IMR-90 (cell line): ENCODE measurements at regions of chr9 and their contacts with region 1.

Region 1: DNA sequence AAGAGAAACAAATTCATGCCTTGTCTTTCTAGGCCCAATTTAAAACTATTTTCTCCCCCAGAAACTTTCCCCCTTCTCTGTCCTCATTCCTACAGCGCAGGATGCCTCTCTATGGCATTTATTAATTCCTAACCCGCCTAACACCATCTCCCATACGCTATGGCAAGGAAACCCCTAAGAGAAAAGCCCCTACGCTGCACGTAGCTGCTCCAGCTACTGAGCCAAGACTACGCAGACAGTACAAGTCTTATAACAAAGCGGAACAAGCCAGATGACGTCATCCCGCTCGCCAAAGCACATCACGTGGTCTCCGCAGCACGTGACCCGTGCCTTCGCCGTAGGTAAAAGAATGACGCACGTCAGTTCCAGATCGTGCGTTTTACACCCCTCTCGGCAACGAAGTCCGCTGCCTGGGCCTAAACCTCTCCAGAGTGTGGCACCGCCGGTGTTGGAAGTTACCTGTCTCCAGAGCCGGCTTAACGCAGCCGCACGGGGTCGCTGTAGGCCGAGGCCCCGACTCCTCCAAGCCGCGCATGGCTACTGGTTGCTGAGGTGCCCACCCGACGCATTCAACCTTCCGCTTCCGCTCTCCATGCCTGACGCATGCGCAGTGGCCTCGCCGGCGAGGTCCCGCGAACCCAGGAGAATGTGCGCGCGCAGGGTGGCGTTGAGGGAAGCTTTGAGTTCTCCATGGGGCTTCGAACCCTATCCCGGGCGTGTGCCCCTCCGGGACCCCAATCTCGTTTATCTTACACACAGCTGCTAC is at the start of gene TRMO:
- DNase-seq: peak; percentile 99
- ATAC-seq: peak; percentile 94
- H3K4me3 ChIP-seq: peak within 1 kb of the TSS; percentile 76
- H3K27ac ChIP-seq: peak within 1 kb of the TSS; percentile 96
- H3K4me1 ChIP-seq: peaks cover 2% of the 10 kb centered on the region; the same call in 1 of the 2 replicates
- H3K27me3 ChIP-seq: peaks cover 4% of the 10 kb centered on the region; the same call in 1 of the 2 replicates
- CTCF ChIP-seq: peak; percentile 72
- POLR2A ChIP-seq: peak; percentile 98
- RAD21 ChIP-seq: peak; percentile 58
- total RNA-seq, gene TRMO: 17.5 and 19.9 TPM in 2 replicates

Region 2: DNA sequence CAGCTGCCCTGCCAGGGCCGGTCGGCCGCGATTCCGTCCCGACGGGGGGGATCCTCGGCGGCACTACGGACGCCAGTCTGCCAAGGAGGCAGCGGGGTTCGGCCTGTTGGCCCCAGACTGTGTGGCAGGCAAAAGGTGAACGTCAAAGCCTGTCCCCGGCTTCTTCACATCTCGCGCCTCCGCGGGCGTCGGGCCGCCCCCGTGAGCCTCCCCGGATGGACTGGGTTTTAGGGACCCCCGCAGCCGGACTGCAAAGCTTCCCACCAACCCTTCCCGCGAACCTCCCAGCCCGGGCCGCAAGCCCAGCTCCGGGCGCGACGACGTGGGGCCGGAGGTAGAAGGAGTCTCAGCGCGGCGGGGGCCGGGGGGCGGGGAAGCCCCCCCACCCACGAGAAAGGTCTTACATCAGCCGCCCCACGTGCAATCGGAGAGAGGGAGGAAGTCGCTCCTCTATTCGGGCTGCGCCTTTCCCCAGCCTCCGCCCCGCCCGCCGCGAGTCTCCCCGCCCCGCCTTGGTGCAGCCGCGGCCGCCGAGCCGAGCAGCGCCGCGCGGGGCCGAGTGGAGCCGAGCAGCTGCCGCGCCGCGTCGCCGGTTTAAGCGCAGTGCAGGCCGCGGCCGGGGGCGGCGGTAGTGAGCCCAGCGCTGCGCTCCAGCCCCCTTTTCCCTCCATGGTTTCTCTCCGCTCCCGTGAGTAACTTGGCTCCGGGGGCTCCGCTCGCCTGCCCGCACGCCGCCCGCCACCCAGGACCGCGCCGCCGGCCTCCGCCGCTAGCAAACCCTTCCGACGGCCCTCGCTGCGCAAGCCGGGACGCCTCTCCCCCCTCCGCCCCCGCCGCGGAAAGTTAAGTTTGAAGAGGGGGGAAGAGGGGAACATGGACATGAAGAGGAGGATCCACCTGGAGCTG is 60.8 kb after region 1 on chr9 and contains the start of gene ANP32B:
- CTCF ChIA-PET with region 1: interaction called, 3 read pairs
- POLR2A ChIA-PET with region 1: interaction called, 6 read pairs
- dilution Hi-C with region 1: no loop called
- in situ Hi-C with region 1: no loop called
- intact Hi-C with region 1: loop called (anchors 1 kb)
- DNase-seq: peak; percentile 89
- ATAC-seq: peak; percentile 93
- H3K4me3 ChIP-seq: peak within 1 kb of the TSS; percentile 84
- H3K27ac ChIP-seq: peak within 1 kb of the TSS; percentile 93
- H3K4me1 ChIP-seq: peaks cover 5% of the 10 kb centered on the region
- H3K27me3 ChIP-seq: no peaks in the 10 kb centered on the region
- CTCF ChIP-seq: peak; percentile 96
- POLR2A ChIP-seq: peak; percentile 60; the same call in 1 of the 2 replicates
- RAD21 ChIP-seq: peak; percentile 52
- total RNA-seq, gene ANP32B: 3.9 and 9.4 TPM in 2 replicates

Region 3: GRCh38 chr9:98056269-98057137 is 134.4 kb after region 1 on chr9 and contains the start of gene NANS:
- CTCF ChIA-PET with region 1: no interaction called
- POLR2A ChIA-PET with region 1: interaction called, 4 read pairs
- dilution Hi-C with region 1: no loop called
- in situ Hi-C with region 1: no loop called
- intact Hi-C with region 1: loop called (anchors 1 kb)
- DNase-seq: peak; percentile 97
- ATAC-seq: peak; percentile 97
- H3K4me3 ChIP-seq: peak within 1 kb of the TSS; percentile 88
- H3K27ac ChIP-seq: peak within 1 kb of the TSS; percentile 84
- H3K4me1 ChIP-seq: peaks cover 3% of the 10 kb centered on the region
- H3K27me3 ChIP-seq: no peaks in the 10 kb centered on the region
- CTCF ChIP-seq: peak; percentile 33
- POLR2A ChIP-seq: peak; percentile 99
- RAD21 ChIP-seq: peak; percentile 33; the same call in 1 of the 2 replicates
- total RNA-seq, gene NANS: 306 and 313 TPM in 2 replicates

Region 4: DNA sequence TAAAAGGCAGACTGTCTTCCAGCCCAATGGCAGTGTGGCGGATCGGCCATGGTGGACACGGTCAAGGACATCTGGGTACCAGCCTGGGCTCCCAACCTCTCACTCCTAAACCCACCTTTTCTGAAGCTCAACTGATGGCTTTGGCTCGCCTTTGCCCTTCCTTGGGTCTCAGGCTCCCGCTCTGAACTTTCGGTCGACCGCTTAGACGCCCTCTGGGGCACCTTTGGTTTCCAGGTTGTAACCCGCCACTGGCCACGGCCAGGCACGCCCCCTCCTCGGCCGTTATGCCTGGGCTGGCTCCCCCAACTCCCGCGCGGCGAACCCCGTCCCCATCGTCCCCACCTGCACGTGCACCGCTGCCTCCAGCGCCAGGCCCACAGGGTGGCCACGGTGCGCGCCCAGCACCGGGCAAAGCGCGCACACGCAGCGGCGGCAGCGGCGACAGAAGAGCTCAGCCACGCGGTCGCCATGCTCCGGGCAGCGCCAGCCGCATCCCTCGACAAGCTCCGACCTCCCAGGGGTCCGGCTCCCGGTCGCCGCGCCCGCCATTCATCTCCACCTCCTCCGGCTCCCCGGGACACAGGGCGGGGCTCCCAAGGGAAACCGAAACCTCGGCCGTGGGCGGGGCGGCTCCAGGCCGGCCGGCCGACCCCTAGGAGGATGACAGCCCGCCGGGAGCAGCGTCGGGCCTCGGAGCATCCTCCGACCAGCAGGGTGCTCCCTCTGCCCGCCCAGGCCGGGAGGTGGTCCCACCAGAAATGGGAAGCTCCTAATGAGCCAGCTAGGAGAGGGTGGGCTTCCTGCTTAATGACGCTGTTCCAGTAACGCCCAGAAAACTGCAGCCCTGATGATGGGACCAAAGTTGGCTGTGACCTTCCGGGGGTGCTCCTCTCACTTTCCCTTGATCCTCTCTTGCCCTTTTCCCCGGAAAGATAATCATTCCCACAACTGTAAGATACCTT is 196.8 kb after region 1 on chr9 and contains the start of gene TRIM14:
- CTCF ChIA-PET with region 1: no interaction called
- POLR2A ChIA-PET with region 1: no interaction called
- dilution Hi-C with region 1: no loop called
- in situ Hi-C with region 1: no loop called
- intact Hi-C with region 1: loop called (anchors 2 kb)
- DNase-seq: peak; percentile 55
- ATAC-seq: peak; percentile 98
- H3K4me3 ChIP-seq: peak within 1 kb of the TSS; percentile 70
- H3K27ac ChIP-seq: peak within 1 kb of the TSS; percentile 10
- H3K4me1 ChIP-seq: no peaks in the 10 kb centered on the region
- H3K27me3 ChIP-seq: no peaks in the 10 kb centered on the region
- CTCF ChIP-seq: peak; percentile 46
- POLR2A ChIP-seq: no peak
- RAD21 ChIP-seq: peak; percentile 39
- total RNA-seq, gene TRIM14: 3.0 and 3.1 TPM in 2 replicates

Region 5: DNA sequence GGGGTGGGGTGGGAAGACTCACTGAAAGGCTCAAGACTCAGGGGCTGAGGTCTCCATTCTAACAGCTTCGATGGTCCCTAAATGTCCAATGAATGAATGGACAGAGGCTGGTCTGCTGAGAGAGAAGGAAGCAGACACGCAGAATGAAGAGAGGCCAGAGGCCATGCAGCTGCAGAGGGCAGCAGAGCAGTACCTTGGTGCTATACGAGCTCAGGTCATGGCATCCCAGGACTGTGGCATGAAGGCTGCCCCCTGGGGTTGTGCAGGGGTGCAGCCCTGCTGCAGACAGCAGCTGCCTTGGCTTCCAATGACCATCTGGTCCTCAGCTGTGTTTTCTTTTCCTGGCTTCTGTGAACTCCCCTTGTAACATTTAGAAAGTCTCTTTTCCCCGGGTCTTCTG is 285.5 kb after region 1 on chr9:
- CTCF ChIA-PET with region 1: interaction called, 3 read pairs
- POLR2A ChIA-PET with region 1: no interaction called
- dilution Hi-C with region 1: no loop called
- in situ Hi-C with region 1: no loop called
- intact Hi-C with region 1: loop called (anchors 5 kb)
- DNase-seq: peak; percentile 20
- ATAC-seq: no peak; the same call in 1 of the 2 replicates
- H3K4me3 ChIP-seq: no peak overlapping the region
- H3K27ac ChIP-seq: no peak overlapping the region
- H3K4me1 ChIP-seq: no peaks in the 10 kb centered on the region
- H3K27me3 ChIP-seq: no peaks in the 10 kb centered on the region
- CTCF ChIP-seq: no peak
- POLR2A ChIP-seq: no peak
- RAD21 ChIP-seq: no peak

Region 6: DNA sequence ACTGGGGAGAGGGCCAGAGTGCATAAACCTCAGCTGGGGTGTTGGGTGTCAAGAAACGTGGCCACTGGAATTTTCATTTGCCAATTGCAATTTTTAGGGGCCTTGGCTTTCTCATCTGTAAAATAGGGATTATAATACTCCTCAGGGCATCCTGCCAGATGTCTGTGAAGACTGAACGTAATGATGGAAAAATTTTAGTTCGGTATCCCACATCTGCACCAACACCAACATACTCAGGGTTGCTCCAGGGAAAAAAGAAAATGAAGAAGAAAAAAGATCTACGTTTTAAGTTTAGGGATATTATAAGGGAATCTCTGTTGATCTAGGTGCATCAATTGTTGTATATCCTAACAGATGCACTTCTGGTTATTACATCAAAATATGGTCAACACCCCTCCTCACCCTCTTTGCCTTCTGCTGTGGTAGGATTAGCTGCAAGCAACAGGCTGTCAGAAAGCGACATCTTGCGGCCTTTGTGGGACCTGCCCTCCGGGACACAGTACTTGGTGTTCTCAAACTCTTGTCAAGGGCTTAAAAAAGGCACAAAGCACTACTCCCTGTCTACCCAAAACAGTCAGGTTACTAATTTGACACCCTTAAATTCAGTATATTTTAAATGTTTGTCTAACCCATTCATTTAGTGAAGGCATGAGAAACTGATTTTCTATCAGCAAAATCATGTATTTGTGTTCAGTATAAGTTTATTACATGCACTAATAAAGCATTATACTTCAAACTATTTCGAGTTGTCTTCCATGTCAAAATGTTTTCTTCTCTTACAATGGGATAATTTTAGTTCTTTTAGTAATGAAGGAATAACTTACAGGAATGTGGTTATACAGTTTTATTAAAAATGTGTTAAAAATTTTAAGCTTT is 341.6 kb after region 1 on chr9:
- CTCF ChIA-PET with region 1: interaction called, 3 read pairs
- POLR2A ChIA-PET with region 1: no interaction called
- dilution Hi-C with region 1: no loop called
- in situ Hi-C with region 1: loop called (anchors 5 kb)
- intact Hi-C with region 1: loop called (anchors 1 kb)
- DNase-seq: peak; percentile 84
- ATAC-seq: peak; percentile 100
- H3K4me3 ChIP-seq: no peak overlapping the region
- H3K27ac ChIP-seq: no peak overlapping the region
- H3K4me1 ChIP-seq: peaks cover 2% of the 10 kb centered on the region
- H3K27me3 ChIP-seq: no peaks in the 10 kb centered on the region
- CTCF ChIP-seq: peak; percentile 97
- POLR2A ChIP-seq: no peak; the same call in 1 of the 2 replicates
- RAD21 ChIP-seq: peak; percentile 100